PC-9 (cell line): ENCODE measurements at regions of chr3 and their contacts with region 1.

Region 1: GRCh38 chr3:172750368-172751174 is at the start of gene ECT2:
- DNase-seq: peak; percentile 100
- H3K4me3 ChIP-seq: peak within 1 kb of the TSS; percentile 81
- H3K27ac ChIP-seq: peak within 1 kb of the TSS; percentile 98
- H3K4me1 ChIP-seq: peaks cover 74% of the 10 kb centered on the region
- H3K27me3 ChIP-seq: no peaks in the 10 kb centered on the region
- CTCF ChIP-seq: peak; percentile 91
- total RNA-seq, gene ECT2: 128 and 145 TPM in 2 replicates

Region 2: DNA sequence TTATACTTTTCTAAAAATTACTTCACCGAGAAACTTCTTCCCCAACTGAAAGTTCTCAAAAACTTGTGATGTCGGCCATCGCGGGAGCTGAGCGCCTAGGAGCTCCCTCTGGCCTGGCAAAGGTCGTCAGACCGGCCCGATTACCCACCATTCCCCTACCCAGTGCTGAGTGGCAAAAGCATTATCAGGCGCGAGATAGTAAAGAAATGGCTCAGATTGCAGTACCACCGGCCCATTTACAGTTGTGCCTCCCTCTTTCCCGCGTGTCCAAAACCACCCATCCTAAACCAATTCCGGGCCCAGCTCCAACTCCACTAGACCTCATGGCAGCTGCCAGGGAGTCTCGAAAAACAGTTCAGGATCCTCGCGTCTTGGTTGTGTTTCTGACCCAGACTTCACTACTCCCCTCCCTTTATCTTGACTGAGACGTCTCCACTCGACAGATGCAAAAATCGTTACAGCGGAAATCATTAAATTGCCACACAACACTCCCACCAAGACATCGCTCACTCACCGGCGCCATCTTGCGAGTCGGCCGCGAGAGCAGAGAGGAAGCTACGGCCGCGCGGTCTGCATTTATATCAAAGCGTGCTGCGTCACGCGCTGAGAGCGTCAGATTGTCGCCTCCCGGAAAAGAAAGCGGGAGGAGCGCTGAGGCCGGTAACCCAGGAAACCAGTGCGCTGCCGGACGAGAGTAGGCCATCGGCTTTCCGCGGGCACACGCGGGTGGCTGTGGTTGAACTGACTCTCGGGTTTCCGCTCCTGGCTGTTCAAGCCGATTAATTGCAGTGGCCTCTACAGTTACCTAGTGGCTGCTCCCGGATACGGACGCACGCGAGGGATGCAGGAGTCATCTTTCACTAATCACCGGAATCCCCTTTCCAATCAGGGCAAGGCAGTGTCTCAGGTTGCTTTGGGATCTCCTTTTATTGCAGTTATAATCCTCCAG is 1880.7 kb before region 1 on chr3 and contains the start of gene RPL22L1:
- CTCF ChIA-PET with region 1: interaction called, 27 read pairs
- POLR2A ChIA-PET with region 1: no interaction called
- intact Hi-C with region 1: no loop called
- DNase-seq: peak; percentile 96
- H3K4me3 ChIP-seq: peak within 1 kb of the TSS; percentile 92
- H3K27ac ChIP-seq: peak within 1 kb of the TSS; percentile 94
- H3K4me1 ChIP-seq: peaks cover 35% of the 10 kb centered on the region
- H3K27me3 ChIP-seq: no peaks in the 10 kb centered on the region
- CTCF ChIP-seq: no peak; the same call in 1 of the 2 replicates
- total RNA-seq, gene RPL22L1: 57.3 and 60.3 TPM in 2 replicates

Region 3: GRCh38 chr3:171809821-171810628 is 940.5 kb before region 1 on chr3 and contains the start of gene PLD1:
- CTCF ChIA-PET with region 1: no interaction called
- POLR2A ChIA-PET with region 1: no interaction called
- intact Hi-C with region 1: loop called (anchors 1 kb)
- DNase-seq: peak; percentile 86 to 95
- H3K4me3 ChIP-seq: peak within 1 kb of the TSS; percentile 61
- H3K27ac ChIP-seq: peak within 1 kb of the TSS; percentile 98
- H3K4me1 ChIP-seq: peaks cover 75% of the 10 kb centered on the region
- H3K27me3 ChIP-seq: no peaks in the 10 kb centered on the region
- CTCF ChIP-seq: no peak
- total RNA-seq, gene PLD1: 32.5 and 33.3 TPM in 2 replicates

Region 4: GRCh38 chr3:171980578-171981270 is 769.8 kb before region 1 on chr3:
- CTCF ChIA-PET with region 1: no interaction called
- POLR2A ChIA-PET with region 1: no interaction called
- intact Hi-C with region 1: no loop called
- DNase-seq: no peak
- H3K4me3 ChIP-seq: no peak overlapping the region
- H3K27ac ChIP-seq: no peak overlapping the region
- H3K4me1 ChIP-seq: peaks cover 16% of the 10 kb centered on the region
- H3K27me3 ChIP-seq: no peaks in the 10 kb centered on the region
- CTCF ChIP-seq: no peak

Region 5: GRCh38 chr3:172550347-172550943 is 200.1 kb before region 1 on chr3:
- CTCF ChIA-PET with region 1: no interaction called
- POLR2A ChIA-PET with region 1: interaction called, 5 read pairs
- intact Hi-C with region 1: loop called (anchors 5 kb)
- DNase-seq: peak; percentile 79 to 88
- H3K4me3 ChIP-seq: no peak overlapping the region
- H3K27ac ChIP-seq: no peak overlapping the region
- H3K4me1 ChIP-seq: peaks cover 50% of the 10 kb centered on the region
- H3K27me3 ChIP-seq: no peaks in the 10 kb centered on the region
- CTCF ChIP-seq: no peak

Region 6: DNA sequence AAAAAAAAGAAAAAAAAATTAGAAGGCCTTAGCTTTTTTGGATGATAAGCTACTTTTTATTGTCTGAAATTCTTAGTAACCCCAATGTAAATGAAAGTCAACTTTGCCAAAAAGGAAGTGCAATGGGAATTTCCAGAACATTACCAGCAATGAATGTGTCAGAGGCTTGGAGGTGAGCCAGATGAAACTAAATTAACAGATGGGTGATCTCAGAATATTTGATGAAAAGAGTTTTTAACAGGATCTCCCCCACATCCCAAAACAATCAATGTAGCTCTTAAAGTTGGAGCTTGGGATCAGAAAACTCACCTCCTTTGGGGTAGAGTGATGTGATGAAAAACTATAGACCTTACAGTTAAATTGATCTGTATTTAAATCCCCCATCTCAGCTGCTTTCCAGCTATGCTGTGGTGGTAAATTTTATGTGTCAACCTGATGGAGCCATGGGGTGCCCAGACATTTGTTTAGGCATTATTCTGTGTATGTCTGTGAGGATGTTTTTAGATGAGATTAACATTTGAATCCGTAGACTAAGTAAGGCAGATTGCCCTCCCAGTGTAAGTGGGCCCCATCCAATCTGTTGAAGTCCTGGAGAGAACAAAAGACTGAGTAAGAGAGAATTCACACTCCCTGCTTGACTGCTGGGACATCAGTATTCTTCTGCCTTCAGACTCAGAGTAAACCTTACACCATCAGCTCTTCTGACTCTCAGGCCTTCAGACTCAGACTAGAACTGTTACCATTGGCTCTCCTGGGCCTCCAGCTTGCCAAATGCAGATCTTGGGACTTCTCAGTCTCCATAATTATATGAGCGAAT is 143.1 kb before region 1 on chr3:
- CTCF ChIA-PET with region 1: no interaction called
- POLR2A ChIA-PET with region 1: interaction called, 10 read pairs
- intact Hi-C with region 1: no loop called
- DNase-seq: peak in 1 of 2 experiments; percentile 53
- H3K4me3 ChIP-seq: no peak overlapping the region
- H3K27ac ChIP-seq: no peak overlapping the region
- H3K4me1 ChIP-seq: 0 out of 2 replicates have a peak, but pooled peaks cover 7% of the 10 kb centered on the region
- H3K27me3 ChIP-seq: no peaks in the 10 kb centered on the region
- CTCF ChIP-seq: no peak

Region 7: DNA sequence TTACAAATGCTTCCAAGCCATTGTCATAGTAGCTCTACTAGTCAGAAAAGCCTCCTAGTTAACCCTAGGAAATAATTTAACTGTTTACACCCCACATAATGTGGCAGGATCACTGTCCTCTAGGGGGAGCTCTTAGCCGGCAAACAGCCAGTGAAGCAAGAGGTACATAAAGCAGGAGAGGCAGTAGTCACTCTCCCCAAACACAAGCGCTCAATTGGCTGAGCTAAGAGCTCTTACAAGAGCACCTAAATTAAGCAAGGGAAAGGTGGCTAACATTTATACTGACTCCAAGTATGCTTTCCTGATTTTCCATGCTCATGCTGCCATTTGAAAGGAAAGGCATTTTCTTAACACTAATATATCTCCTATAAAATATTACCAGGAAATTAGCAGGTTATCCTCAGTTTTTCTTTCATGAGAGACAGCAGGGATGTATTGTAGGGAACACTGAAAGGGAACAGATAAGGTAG is 77.3 kb before region 1 on chr3:
- CTCF ChIA-PET with region 1: interaction called, 40 read pairs
- POLR2A ChIA-PET with region 1: interaction called, 24 read pairs
- intact Hi-C with region 1: loop called (anchors 1 kb)
- DNase-seq: peak; percentile 78 to 82
- H3K4me3 ChIP-seq: no peak overlapping the region
- H3K27ac ChIP-seq: peak overlapping the region; percentile 45
- H3K4me1 ChIP-seq: peaks cover 26% of the 10 kb centered on the region
- H3K27me3 ChIP-seq: no peaks in the 10 kb centered on the region
- CTCF ChIP-seq: peak; percentile 98

Region 8: GRCh38 chr3:172726382-172726781 is 24.2 kb before region 1 on chr3:
- CTCF ChIA-PET with region 1: interaction called, 6 read pairs
- POLR2A ChIA-PET with region 1: interaction called, 12 read pairs
- intact Hi-C with region 1: loop called (anchors 1 kb)
- DNase-seq: peak in 1 of 2 experiments; percentile 11
- H3K4me3 ChIP-seq: no peak overlapping the region
- H3K27ac ChIP-seq: no peak overlapping the region
- H3K4me1 ChIP-seq: peaks cover 23% of the 10 kb centered on the region
- H3K27me3 ChIP-seq: no peaks in the 10 kb centered on the region
- CTCF ChIP-seq: no peak